ENCODE measurements at regions of chr20 and their contacts with region 1.

Region 1: DNA sequence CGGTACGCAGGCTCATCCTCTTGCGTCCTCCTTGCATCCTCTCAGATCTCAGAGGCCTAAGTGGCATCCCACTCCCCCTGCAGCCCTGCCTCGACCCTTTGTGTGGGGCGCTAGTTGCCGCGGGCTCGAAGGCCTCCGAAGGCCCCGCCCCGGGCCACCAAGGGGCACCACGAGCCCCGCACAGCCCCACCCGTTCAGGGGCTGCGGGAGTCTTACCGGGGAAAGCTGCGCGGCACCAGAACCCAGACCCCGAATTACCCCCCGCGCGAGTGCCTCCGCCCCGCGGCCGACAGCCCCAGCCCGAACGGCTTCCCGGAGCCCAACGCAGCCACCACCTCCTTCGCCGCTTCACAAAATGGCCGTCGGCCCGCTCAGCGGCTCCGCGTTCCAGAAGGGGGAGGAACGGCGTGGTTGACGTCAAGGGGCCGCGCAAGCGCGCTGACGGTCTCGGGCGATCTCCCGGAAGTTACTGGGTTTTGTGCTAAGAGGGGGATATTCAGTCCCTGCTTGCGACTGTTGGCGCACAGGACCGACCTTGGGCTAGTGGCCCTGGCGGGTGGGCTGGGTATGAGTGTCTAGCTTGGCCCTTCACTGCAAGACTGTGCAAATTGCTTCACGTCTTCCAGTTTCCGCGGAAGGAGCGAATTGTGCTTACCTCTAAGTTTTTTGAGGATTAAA is at the starts of genes CPNE1 and RBM12:
- DNase-seq: peak; percentile 96 to 97
- ATAC-seq: peak; percentile 97
- H3K4me3 ChIP-seq: peak within 1 kb of the TSS; percentile 77 to 84
- H3K27ac ChIP-seq: peak within 1 kb of the TSS; percentile 63 to 93
- H3K4me1 ChIP-seq: peaks cover 0 to 6% of the 10 kb centered on the region in 2 donors
- H3K27me3 ChIP-seq: no peaks in the 10 kb centered on the region
- total RNA-seq, gene CPNE1: 176 to 204 TPM
- total RNA-seq, gene RBM12: 73.3 to 79.3 TPM

Region 2: GRCh38 chr20:35329435-35330139 is 335.1 kb before region 1 on chr20:
- intact Hi-C with region 1: no loop called
- DNase-seq: no peak
- ATAC-seq: no peak
- H3K4me3 ChIP-seq: no peak overlapping the region
- H3K27ac ChIP-seq: no peak overlapping the region
- H3K4me1 ChIP-seq: peaks cover 0 to 2% of the 10 kb centered on the region in 2 donors
- H3K27me3 ChIP-seq: no peaks in the 10 kb centered on the region

Region 3: DNA sequence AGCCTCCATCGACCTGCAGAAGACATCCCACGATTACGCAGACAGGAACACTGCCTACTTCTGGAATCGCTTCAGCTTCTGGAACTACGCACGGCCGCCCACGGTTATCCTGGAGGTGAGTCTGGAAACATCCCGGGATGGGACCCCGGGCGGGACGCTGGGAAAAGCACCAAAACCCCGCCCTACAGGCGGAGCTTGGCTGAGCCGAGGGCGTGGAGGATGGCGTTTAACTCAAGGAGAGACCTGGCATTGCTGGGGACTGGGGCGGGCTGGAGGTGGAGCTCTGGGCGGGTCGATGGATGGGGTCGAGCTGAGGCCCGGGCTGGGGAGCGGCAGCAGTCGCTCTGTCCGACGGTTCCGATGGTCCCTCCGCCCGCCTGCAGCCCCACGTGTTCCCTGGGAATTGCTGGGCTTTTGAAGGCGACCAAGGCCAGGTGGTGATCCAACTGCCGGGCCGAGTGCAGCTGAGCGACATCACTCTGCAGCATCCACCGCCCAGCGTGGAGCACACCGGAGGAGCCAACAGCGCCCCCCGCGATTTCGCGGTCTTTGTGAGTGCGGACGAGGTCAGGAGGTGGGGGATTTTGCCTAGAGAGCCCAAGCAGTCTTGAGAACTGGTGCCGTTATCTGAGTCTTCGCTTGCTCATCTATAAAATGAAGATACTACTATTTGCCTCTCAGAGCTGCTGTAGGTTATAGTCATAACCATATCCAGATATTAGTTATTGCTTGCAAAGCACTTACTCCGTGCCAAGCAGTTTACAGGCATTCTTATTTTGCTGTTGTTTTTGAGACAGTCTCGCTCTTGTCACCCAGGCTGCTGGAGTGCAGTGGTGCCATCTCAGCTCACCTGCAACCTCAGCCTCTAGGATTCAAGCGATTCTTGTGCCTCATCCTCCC is 45.2 kb before region 1 on chr20:
- intact Hi-C with region 1: loop called in 1 of 2 experiments (anchors 5 kb)
- DNase-seq: peak; percentile 85 to 92
- ATAC-seq: peak; percentile 51
- H3K4me3 ChIP-seq: peak overlapping the region; percentile 10 to 50
- H3K27ac ChIP-seq: no peak overlapping the region
- H3K4me1 ChIP-seq: no peaks in the 10 kb centered on the region
- H3K27me3 ChIP-seq: no peaks in the 10 kb centered on the region

Region 4: DNA sequence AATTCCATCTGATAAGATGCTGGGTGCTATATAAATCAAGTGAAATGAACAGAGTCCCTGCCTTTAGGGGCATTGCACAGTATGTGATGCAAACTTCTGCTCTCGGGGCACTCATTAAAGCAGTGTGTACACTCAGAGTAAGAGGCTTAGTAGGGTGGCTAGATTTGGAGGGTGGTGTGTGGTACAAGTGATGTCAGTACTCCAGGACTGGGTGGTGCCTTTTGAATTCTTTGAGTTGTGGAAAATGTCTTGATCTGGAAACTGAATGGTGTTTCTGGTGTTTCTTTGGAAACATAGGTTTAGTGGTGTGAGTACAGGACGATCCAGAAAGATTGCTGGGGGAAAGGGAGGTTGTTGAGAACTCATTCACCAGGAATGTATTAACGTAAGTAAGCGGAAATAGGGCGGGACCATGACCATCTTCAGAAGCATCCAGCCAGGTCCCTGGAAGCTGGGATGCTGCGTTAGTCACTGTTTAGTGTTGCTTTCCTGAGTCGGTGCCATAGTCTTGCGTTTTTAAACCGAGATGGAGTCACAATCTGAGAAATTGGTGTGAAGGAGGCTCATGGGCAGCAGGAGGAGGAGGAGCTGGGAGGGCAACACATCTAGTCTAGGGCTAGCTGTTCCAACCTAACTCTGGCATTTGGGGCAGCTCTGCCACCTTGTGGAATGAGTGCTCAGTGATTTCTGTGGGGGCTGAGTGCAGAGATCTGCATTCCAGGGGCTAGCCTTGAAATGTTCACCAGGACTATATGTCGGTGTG is 219.3 kb after region 1 on chr20:
- intact Hi-C with region 1: no loop called
- DNase-seq: peak; percentile 82 to 89
- ATAC-seq: peak; percentile 94
- H3K4me3 ChIP-seq: no peak overlapping the region
- H3K27ac ChIP-seq: peak overlapping the region; percentile 61 to 95
- H3K4me1 ChIP-seq: no peaks in the 10 kb centered on the region
- H3K27me3 ChIP-seq: no peaks in the 10 kb centered on the region